ENCODE measurements at regions of chr12 and their contacts with region 1.

Region 1: GRCh38 chr12:113048716-113049127 is 7.8 kb upstream of the DTX1 start:
- DNase-seq: peak in 2 of 5 donors; percentile 52 to 55
- ATAC-seq: peak in 3 of 4 donors; percentile 70 to 80 (median 80)
- H3K4me3 ChIP-seq: no peak overlapping the region
- H3K27ac ChIP-seq: no peak overlapping the region
- H3K4me1 ChIP-seq: no peaks in the 10 kb centered on the region
- H3K27me3 ChIP-seq: peaks cover 0 to 24% (median 4%) of the 10 kb centered on the region in 9 donors
- CTCF ChIP-seq: peak; percentile 74 to 92 (median 82)
- POLR2A ChIP-seq: no peak

Region 2: GRCh38 chr12:113098446-113098896 is 49.7 kb after region 1 on chr12:
- intact Hi-C with region 1: loop called (anchors 1 to 5 kb)
- DNase-seq: peak; percentile 69 to 81 (median 78)
- ATAC-seq: peak; percentile 26 to 90 (median 78)
- H3K4me3 ChIP-seq: no peak overlapping the region
- H3K27ac ChIP-seq: no peak overlapping the region
- H3K4me1 ChIP-seq: peaks cover 0 to 11% (median 3%) of the 10 kb centered on the region in 12 donors
- H3K27me3 ChIP-seq: peaks cover 2 to 38% (median 7%) of the 10 kb centered on the region in 9 donors
- CTCF ChIP-seq: peak; percentile 60 to 81 (median 71)
- POLR2A ChIP-seq: no peak

Region 3: DNA sequence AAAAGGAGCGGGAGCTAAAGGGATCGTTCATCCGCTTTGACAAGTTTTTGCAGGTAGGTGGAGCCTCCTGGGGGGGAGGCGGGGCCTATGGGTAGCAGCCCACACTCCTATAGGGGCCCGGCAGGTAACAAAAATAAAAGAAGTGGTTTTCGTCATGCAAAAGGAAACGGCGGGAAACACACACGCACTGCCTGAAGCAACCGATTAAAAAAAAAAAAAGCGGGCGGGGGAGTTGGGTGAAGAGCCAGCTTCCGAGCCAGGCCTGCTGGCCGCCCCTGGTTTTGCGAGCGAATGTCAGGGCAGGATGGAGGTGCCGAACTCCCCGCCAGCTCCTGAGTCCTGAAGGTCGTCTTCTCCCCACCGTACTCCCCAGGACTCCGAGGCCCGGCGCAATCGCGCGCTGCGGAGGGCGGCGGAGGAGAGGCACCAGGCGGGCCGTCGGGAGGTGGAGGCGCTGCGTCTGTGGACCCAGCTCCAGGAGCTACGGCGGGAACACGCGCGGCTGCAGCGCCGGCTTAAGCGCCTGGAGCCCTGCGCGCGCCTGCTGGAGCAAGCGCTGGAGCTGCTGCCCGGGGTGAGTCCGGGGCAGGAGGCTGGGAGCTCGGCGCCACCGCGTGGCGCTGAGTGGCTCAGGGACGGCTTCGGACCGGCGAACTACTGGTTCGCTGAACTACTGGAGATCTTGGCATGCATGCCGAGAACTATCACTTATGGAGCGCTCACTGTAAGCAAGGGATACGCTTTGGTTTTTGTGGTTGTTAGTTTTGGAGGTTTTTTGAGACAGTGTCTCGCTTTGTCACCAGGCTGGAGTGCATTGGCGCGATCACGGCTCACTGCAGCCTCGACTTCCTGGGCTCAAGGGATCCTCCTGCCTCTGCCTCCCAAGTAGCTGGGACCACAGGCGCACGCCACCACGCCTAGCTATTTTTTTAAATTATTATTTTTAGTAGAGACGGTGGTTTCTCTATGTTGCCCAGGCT is 104.4 kb after region 1 on chr12:
- intact Hi-C with region 1: loop called (anchors 1 to 5 kb)
- DNase-seq: peak; percentile 59 to 81 (median 65)
- ATAC-seq: peak; percentile 59 to 86 (median 86)
- H3K4me3 ChIP-seq: peak overlapping the region in 11 of 12 donors; percentile 24 to 56 (median 38)
- H3K27ac ChIP-seq: no peak overlapping the region
- H3K4me1 ChIP-seq: peaks cover 0 to 33% (median 13%) of the 10 kb centered on the region in 12 donors
- H3K27me3 ChIP-seq: peaks cover 6 to 66% (median 47%) of the 10 kb centered on the region in 9 donors
- CTCF ChIP-seq: peak; percentile 13 to 65 (median 47)
- POLR2A ChIP-seq: no peak

Region 4: DNA sequence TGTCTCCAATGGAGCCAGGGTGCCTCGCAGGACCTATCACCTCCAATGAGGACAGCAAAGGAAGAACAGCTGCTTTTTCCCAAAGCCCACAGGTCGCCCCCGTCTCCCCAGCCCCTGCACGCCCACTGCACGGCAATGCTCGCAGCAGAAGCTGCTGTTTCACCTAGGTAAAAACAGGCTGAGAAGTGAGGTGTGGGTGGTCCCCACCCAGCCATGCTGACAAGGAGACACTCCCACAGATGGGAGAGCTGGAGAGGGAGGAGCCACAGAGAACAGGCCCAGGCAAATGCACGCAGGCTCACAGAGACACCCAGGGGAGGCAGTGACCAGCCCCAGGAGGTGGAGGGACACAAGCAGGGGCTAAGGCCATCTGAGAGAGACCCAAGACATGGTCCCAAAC is 111.2 kb after region 1 on chr12:
- intact Hi-C with region 1: loop called in 1 of 10 experiments (anchors 5 kb)
- DNase-seq: peak in 1 of 5 donors; percentile 18
- ATAC-seq: no peak
- H3K4me3 ChIP-seq: no peak overlapping the region
- H3K27ac ChIP-seq: no peak overlapping the region
- H3K4me1 ChIP-seq: peaks cover 0 to 6% (median 0%) of the 10 kb centered on the region in 12 donors
- H3K27me3 ChIP-seq: peaks cover 0 to 17% (median 6%) of the 10 kb centered on the region in 9 donors
- CTCF ChIP-seq: no peak
- POLR2A ChIP-seq: no peak

Region 5: GRCh38 chr12:113174461-113175384 is 126.0 kb after region 1 on chr12:
- intact Hi-C with region 1: loop called (anchors 1 to 5 kb)
- DNase-seq: peak; percentile 56 to 87 (median 70)
- ATAC-seq: peak; percentile 18 to 79 (median 76)
- H3K4me3 ChIP-seq: no peak overlapping the region
- H3K27ac ChIP-seq: no peak overlapping the region
- H3K4me1 ChIP-seq: no peaks in the 10 kb centered on the region
- H3K27me3 ChIP-seq: no peaks in the 10 kb centered on the region
- CTCF ChIP-seq: peak; percentile 96 to 100 (median 99)
- POLR2A ChIP-seq: no peak

Measured in heart left ventricle (tissue), 16 donors.